ENCODE measurements at regions of chr5 and their contacts with region 1.

Region 1: DNA sequence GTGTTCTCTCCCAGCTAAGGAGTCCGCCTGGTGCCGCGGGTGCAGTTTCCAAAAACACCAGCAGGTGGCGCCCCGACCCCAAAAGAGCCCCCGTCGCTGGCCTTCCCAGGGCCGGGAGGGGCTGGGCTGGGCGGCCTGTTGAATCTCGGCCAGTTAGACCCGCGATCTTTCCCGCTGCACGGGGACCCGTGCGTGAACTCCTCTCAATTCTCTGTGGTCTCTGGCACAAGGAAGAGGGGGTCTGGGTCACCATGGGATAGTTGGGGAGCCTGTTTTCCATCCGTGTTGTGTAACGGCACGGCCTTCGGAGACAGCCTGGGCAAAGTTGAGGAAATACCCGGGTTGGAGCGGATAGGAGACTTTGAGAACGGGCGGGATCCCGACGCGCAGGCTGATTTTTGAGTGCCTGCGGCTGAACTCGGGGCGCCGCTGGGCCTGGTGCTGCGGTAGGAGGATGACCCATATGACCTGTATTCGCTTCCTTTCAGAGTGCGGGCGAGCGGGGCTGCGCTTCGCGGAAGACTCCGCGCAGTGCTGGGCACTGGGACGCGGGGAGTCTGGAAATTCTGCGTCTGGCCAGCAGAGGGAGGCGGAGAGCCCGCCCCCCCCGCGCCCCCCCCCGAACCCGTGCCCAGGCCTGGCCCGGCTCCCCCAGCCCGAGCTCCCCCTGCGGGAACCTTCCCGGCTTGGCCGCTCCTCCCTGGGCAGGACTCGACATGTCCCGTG is 7.9 kb upstream of the PSD2 start:
- DNase-seq: peak; percentile 85 to 94
- H3K4me3 ChIP-seq: peak overlapping the region; percentile 43
- H3K4me3 Mint-ChIP-seq: peak overlapping the region; percentile 72
- H3K27ac Mint-ChIP-seq: no peak overlapping the region
- H3K4me1 ChIP-seq: no peaks in the 10 kb centered on the region
- H3K4me1 Mint-ChIP-seq: no peaks in the 10 kb centered on the region
- H3K27me3 ChIP-seq: no peaks in the 10 kb centered on the region; the same call in none of the 2 replicates
- H3K27me3 Mint-ChIP-seq: peaks cover 30% of the 10 kb centered on the region
- CTCF ChIP-seq: peak; percentile 94 to 98

Region 2: GRCh38 chr5:139765409-139766217 is 22.1 kb before region 1 on chr5:
- CTCF ChIA-PET with region 1: interaction called, 10 read pairs
- POLR2A ChIA-PET with region 1: no interaction called
- intact Hi-C with region 1: no loop called
- DNase-seq: peak; percentile 75 to 87
- H3K4me3 ChIP-seq: peak overlapping the region; percentile 62
- H3K4me3 Mint-ChIP-seq: peak overlapping the region; percentile 67
- H3K27ac Mint-ChIP-seq: peak overlapping the region; percentile 47
- H3K4me1 ChIP-seq: peaks cover 9% of the 10 kb centered on the region; the same call in 1 of the 2 replicates
- H3K4me1 Mint-ChIP-seq: peaks cover 6% of the 10 kb centered on the region
- H3K27me3 ChIP-seq: no peaks in the 10 kb centered on the region
- H3K27me3 Mint-ChIP-seq: no peaks in the 10 kb centered on the region
- CTCF ChIP-seq: peak; percentile 86 to 99

Region 3: GRCh38 chr5:139797856-139798510 is 10.3 kb after region 1 on chr5:
- CTCF ChIA-PET with region 1: interaction called, 11 read pairs
- POLR2A ChIA-PET with region 1: no interaction called
- intact Hi-C with region 1: no loop called
- DNase-seq: no peak
- H3K4me3 ChIP-seq: no peak overlapping the region
- H3K4me3 Mint-ChIP-seq: no peak overlapping the region
- H3K27ac Mint-ChIP-seq: no peak overlapping the region
- H3K4me1 ChIP-seq: no peaks in the 10 kb centered on the region
- H3K4me1 Mint-ChIP-seq: no peaks in the 10 kb centered on the region
- H3K27me3 ChIP-seq: peaks cover 10% of the 10 kb centered on the region
- H3K27me3 Mint-ChIP-seq: peaks cover 38% of the 10 kb centered on the region
- CTCF ChIP-seq: no peak

Region 4: GRCh38 chr5:139863855-139864558 is 76.3 kb after region 1 on chr5:
- CTCF ChIA-PET with region 1: interaction called, 11 read pairs
- POLR2A ChIA-PET with region 1: no interaction called
- intact Hi-C with region 1: loop called (anchors 1 kb)
- DNase-seq: peak; percentile 61 to 76
- H3K4me3 ChIP-seq: no peak overlapping the region
- H3K4me3 Mint-ChIP-seq: no peak overlapping the region
- H3K27ac Mint-ChIP-seq: no peak overlapping the region
- H3K4me1 ChIP-seq: no peaks in the 10 kb centered on the region
- H3K4me1 Mint-ChIP-seq: no peaks in the 10 kb centered on the region
- H3K27me3 ChIP-seq: no peaks in the 10 kb centered on the region; the same call in none of the 2 replicates
- H3K27me3 Mint-ChIP-seq: peaks cover 16% of the 10 kb centered on the region
- CTCF ChIP-seq: peak; percentile 82 to 88

Region 5: DNA sequence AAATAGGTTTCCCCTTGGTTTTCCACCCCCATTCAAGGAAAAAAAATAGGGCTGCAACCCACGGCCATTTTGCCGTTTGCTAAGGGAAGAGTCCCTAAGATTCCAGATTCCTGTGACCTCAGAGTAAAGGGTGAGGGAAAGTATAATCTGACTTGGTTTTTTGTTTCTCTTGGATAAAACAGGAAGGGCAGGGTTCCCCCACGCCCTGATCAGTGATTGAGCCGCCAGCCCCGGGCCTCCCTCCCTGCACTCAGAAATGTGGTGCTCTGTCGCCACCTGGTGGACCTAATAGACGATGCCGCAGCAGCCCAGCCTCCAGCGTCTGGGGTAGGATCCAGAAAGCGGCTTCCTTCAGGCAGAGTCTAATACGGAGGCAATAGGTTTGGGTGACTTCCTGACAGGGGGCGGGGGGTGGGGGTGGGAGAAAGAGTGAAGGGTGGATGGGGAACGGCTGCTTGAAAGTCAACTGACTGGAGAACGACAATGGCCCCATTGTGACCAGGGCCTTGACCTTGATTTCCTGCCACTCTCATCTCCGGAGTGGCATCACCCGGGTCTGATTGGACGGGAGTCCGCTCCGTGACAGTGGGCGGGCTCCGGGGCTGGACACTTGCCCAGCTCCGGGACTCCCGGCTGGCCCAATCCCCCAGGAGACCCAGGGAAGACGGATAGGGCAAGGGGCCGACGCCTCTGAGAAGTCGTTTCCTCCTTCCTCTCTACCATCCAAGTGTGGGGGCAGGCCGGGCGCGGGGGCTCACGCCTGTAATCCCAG is 369.5 kb after region 1 on chr5:
- CTCF ChIA-PET with region 1: no interaction called
- POLR2A ChIA-PET with region 1: no interaction called
- intact Hi-C with region 1: loop called (anchors 1 kb)
- DNase-seq: peak; percentile 83 to 89
- H3K4me3 ChIP-seq: no peak overlapping the region
- H3K4me3 Mint-ChIP-seq: no peak overlapping the region
- H3K27ac Mint-ChIP-seq: no peak overlapping the region
- H3K4me1 ChIP-seq: peaks cover 6% of the 10 kb centered on the region; the same call in 1 of the 2 replicates
- H3K4me1 Mint-ChIP-seq: peaks cover 2% of the 10 kb centered on the region
- H3K27me3 ChIP-seq: no peaks in the 10 kb centered on the region
- H3K27me3 Mint-ChIP-seq: no peaks in the 10 kb centered on the region
- CTCF ChIP-seq: peak; percentile 91 to 96

Measured in Caco-2 (cell line).